ENCODE measurements at regions of chr1 and their contacts with region 1.

Region 1: DNA sequence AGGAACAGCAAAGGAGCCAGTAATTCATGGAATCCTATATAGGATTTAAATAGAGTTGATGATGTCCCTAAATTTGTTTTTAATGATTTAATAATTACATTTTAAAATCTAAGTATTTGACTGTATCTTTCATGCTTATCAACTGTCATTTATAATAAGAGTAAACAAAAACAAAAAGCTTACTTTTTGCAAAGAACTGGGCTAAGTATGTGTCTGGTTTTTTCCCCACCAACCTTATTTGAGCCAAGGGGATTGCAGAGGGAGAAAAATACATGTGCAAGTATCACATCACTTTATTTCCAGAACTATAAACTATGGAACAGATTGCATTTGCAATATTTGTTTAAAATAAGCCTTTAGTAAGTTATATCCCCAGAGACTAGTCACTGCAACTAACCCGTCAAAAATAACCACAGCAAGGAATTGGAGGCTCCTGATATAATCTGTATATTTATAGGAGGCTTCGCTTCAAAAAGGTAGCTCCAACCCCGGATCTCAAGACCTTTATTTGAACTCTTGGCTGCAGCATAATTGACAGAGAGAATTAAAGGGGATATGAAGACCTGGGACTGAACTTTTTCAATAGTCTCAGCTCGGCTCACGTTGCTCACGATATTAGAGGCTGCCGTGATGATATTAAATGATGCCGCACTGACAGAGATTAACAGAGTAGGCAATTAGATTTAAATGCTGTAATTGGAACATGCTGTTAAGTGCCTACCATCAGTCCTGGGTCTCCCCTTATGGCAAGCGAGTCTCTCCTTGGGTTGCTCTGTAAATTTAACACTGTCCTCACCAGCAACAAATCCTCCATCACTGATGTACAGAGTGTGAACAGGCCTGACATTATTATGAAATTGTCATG is 329.1 kb upstream of the NFIA start:
- H3K4me3 ChIP-seq: no peak overlapping the region
- H3K27ac ChIP-seq: no peak overlapping the region
- H3K4me1 ChIP-seq: no peaks in the 10 kb centered on the region
- CTCF ChIP-seq: no peak

Region 2: DNA sequence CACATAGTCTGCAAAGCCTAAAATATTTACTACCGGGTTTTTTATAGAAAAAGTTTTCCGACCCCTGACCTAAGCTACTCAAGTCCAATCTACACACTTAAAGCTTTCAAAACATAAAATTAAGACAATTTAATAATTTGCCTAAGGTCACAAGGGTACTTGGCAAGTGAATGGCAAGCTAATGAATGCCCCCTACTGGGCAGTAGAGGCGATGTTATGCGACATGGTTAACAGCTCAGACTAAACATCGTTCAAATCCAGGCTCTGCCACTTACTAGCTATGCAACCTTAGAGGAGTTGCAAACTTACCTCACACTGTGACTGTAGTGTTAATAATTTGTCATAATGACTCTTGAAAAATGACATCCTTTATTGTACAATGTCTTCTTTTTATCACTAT is 11.9 kb after region 1 on chr1:
- CTCF ChIA-PET with region 1: interaction called, 13 read pairs
- POLR2A ChIA-PET with region 1: no interaction called
- H3K4me3 ChIP-seq: no peak overlapping the region
- H3K27ac ChIP-seq: no peak overlapping the region
- H3K4me1 ChIP-seq: no peaks in the 10 kb centered on the region
- CTCF ChIP-seq: no peak